ENCODE measurements at regions of chr9 and their contacts with region 1.

Region 1: GRCh38 chr9:125517577-125517976 is 189.4 kb downstream of the MAPKAP1 start:
- DNase-seq: peak in 1 of 2 experiments; percentile 38
- H3K4me3 ChIP-seq: no peak overlapping the region
- H3K27ac ChIP-seq: no peak overlapping the region
- H3K4me1 ChIP-seq: peaks cover 0 to 14% (median 9%) of the 10 kb centered on the region in 4 experiments; a peak in 4 of 7 replicates
- H3K27me3 ChIP-seq: no peaks in the 10 kb centered on the region
- CTCF ChIP-seq: no peak
- EP300 ChIP-seq: no peak
- POLR2A ChIP-seq: no peak
- RAD21 ChIP-seq: no peak

Region 2: GRCh38 chr9:125529589-125530515 is 12.3 kb after region 1 on chr9:
- CTCF ChIA-PET with region 1: interaction called, 15 read pairs
- POLR2A ChIA-PET with region 1: no interaction called
- DNase-seq: no peak
- H3K4me3 ChIP-seq: no peak overlapping the region
- H3K27ac ChIP-seq: no peak overlapping the region
- H3K4me1 ChIP-seq: peaks cover under 1 to 19% (median 7%) of the 10 kb centered on the region in 4 experiments; a peak in 6 of 7 replicates
- H3K27me3 ChIP-seq: no peaks in the 10 kb centered on the region
- CTCF ChIP-seq: no peak
- EP300 ChIP-seq: no peak
- POLR2A ChIP-seq: no peak
- RAD21 ChIP-seq: no peak